Caco-2 (cell line): ENCODE measurements at regions of chr19 and their contacts with region 1.

Region 1: GRCh38 chr19:1355568-1356507 is 27.9 kb upstream of the NDUFS7 start:
- DNase-seq: no peak
- H3K4me3 ChIP-seq: peak overlapping the region; percentile 94
- H3K4me3 Mint-ChIP-seq: peak overlapping the region; percentile 77
- H3K27ac Mint-ChIP-seq: peak overlapping the region; percentile 77
- H3K4me1 ChIP-seq: no peaks in the 10 kb centered on the region
- H3K4me1 Mint-ChIP-seq: peaks cover 5% of the 10 kb centered on the region
- H3K27me3 ChIP-seq: no peaks in the 10 kb centered on the region
- H3K27me3 Mint-ChIP-seq: no peaks in the 10 kb centered on the region
- CTCF ChIP-seq: no peak

Region 2: GRCh38 chr19:1406774-1407499 is 51.1 kb after region 1 on chr19:
- CTCF ChIA-PET with region 1: interaction called, 3 read pairs
- POLR2A ChIA-PET with region 1: no interaction called
- intact Hi-C with region 1: loop called (anchors 2 kb)
- DNase-seq: peak; percentile 97 to 99
- H3K4me3 ChIP-seq: peak overlapping the region; percentile 57
- H3K4me3 Mint-ChIP-seq: peak overlapping the region; percentile 75
- H3K27ac Mint-ChIP-seq: peak overlapping the region; percentile 53
- H3K4me1 ChIP-seq: peaks cover 12% of the 10 kb centered on the region; the same call in 1 of the 2 replicates
- H3K4me1 Mint-ChIP-seq: peaks cover 18% of the 10 kb centered on the region
- H3K27me3 ChIP-seq: no peaks in the 10 kb centered on the region
- H3K27me3 Mint-ChIP-seq: no peaks in the 10 kb centered on the region
- CTCF ChIP-seq: peak; percentile 58 to 63

Region 3: GRCh38 chr19:1417681-1418495 is 62.0 kb after region 1 on chr19:
- CTCF ChIA-PET with region 1: no interaction called
- POLR2A ChIA-PET with region 1: no interaction called
- intact Hi-C with region 1: no loop called
- DNase-seq: no peak
- H3K4me3 ChIP-seq: no peak overlapping the region
- H3K4me3 Mint-ChIP-seq: no peak overlapping the region
- H3K27ac Mint-ChIP-seq: peak overlapping the region; percentile 21
- H3K4me1 ChIP-seq: peaks cover 21% of the 10 kb centered on the region
- H3K4me1 Mint-ChIP-seq: peaks cover 7% of the 10 kb centered on the region
- H3K27me3 ChIP-seq: no peaks in the 10 kb centered on the region
- H3K27me3 Mint-ChIP-seq: no peaks in the 10 kb centered on the region
- CTCF ChIP-seq: no peak

Region 4: GRCh38 chr19:1429750-1430149 is 73.9 kb after region 1 on chr19:
- CTCF ChIA-PET with region 1: no interaction called
- POLR2A ChIA-PET with region 1: no interaction called
- intact Hi-C with region 1: no loop called
- DNase-seq: peak in 1 of 2 experiments; percentile 57
- H3K4me3 ChIP-seq: no peak overlapping the region
- H3K4me3 Mint-ChIP-seq: peak overlapping the region; percentile 10
- H3K27ac Mint-ChIP-seq: no peak overlapping the region
- H3K4me1 ChIP-seq: peaks cover 7% of the 10 kb centered on the region
- H3K4me1 Mint-ChIP-seq: peaks cover 5% of the 10 kb centered on the region
- H3K27me3 ChIP-seq: no peaks in the 10 kb centered on the region
- H3K27me3 Mint-ChIP-seq: no peaks in the 10 kb centered on the region
- CTCF ChIP-seq: no peak